CD4-positive, alpha-beta T cell (primary cell): ENCODE measurements at regions of chr17 and their contacts with region 1.

Region 1: GRCh38 chr17:7239091-7240027 is at the start of gene PHF23:
- DNase-seq: peak; percentile 92 to 99 (median 97)
- ATAC-seq: peak; percentile 66
- H3K4me3 ChIP-seq: peak within 1 kb of the TSS; percentile 93
- H3K4me3 Mint-ChIP-seq: peak within 1 kb of the TSS; percentile 94
- H3K27ac ChIP-seq: peak within 1 kb of the TSS; percentile 88
- H3K27ac Mint-ChIP-seq: peak within 1 kb of the TSS; percentile 93
- H3K4me1 ChIP-seq: peaks cover 63% of the 10 kb centered on the region
- H3K4me1 Mint-ChIP-seq: peaks cover 58% of the 10 kb centered on the region
- H3K27me3 ChIP-seq: no peaks in the 10 kb centered on the region
- H3K27me3 Mint-ChIP-seq: peaks cover 4% of the 10 kb centered on the region
- CTCF ChIP-seq: no peak
- total RNA-seq, gene PHF23: 4.5 to 5.1 TPM

Region 2: DNA sequence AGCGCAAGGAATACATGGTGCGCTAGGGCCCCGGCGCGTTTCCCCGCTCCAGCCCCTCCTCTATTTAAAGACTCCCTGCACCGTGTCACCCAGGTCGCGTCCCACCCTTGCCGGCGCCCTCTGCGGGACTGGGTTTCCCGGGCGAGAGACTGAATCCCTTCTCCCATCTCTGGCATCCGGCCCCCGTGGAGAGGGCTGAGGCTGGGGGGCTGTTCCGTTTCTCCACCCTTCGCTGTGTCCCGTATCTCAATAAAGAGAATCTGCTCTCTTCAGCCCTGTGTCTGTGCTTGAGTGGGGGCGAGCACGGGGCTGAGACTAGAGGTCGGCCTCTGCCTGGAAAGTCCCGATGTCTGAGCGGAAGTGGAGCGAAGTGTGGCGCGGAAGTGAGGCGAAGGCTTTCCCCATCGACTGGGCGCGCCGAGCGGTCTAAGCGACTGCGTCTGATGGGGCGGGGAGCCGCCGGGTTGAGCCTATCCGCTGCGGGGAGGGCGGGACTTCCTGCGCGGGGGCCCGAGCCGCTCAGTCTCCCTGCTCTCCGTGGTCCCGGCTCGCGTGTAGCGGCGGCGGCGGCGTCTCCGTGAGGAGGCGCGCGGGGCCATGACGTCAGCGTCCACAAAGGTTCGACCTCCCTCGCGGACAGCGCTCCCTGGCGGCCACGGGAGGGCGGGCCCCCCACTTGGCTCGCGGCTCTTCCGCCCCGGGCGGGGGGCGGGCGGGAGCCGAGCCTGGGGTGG is 224.9 kb before region 1 on chr17:
- CTCF ChIA-PET with region 1: no interaction called
- POLR2A ChIA-PET with region 1: interaction called, 10 read pairs
- intact Hi-C with region 1: no loop called
- DNase-seq: peak; percentile 95 to 100 (median 97)
- ATAC-seq: peak; percentile 76
- H3K4me3 ChIP-seq: peak overlapping the region; percentile 99
- H3K4me3 Mint-ChIP-seq: peak overlapping the region; percentile 99
- H3K27ac ChIP-seq: peak overlapping the region; percentile 98 to 99
- H3K27ac Mint-ChIP-seq: peak overlapping the region; percentile 98
- H3K4me1 ChIP-seq: peaks cover 78% of the 10 kb centered on the region
- H3K4me1 Mint-ChIP-seq: peaks cover 68% of the 10 kb centered on the region
- H3K27me3 ChIP-seq: no peaks in the 10 kb centered on the region
- H3K27me3 Mint-ChIP-seq: no peaks in the 10 kb centered on the region
- CTCF ChIP-seq: peak; percentile 70

Region 3: DNA sequence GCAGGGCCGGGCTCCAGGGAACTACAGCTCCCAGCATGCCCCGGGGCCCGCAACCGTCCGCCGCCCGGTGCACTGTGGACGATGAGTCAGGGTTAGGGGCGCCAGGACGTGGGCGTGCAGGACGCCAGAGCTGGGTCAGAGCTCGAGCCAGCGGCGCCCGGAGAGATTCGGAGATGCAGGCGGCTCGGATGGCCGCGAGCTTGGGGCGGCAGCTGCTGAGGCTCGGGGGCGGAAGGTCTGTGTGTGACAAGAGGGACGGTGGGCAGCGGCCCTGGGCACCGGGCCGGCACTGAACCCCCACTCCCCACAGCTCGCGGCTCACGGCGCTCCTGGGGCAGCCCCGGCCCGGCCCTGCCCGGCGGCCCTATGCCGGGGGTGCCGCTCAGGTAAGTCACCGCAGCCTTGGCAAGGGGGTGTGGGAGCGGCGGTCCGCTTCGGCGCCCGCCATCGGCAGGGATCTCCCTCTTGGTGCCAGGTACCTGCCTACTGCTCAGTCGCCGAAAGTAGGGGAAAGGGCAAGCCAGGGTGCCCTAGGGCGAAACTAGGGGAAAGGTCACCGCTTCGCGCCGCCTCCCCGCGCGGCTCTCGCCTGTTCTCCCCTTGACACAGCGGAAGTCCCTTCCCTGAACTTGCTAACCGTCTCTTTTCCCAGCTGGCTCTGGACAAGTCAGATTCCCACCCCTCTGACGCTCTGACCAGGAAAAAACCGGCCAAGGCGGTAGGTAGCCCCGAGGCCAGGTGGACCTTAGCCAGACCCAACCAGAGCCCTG is 19.4 kb before region 1 on chr17 and contains the starts of genes ACADVL and DLG4:
- CTCF ChIA-PET with region 1: interaction called, 20 read pairs
- POLR2A ChIA-PET with region 1: interaction called, 234 read pairs
- intact Hi-C with region 1: loop called in 1 of 2 experiments (anchors 1 kb)
- DNase-seq: peak; percentile 53 to 86 (median 74)
- ATAC-seq: peak; percentile 50
- H3K4me3 ChIP-seq: peak within 1 kb of the TSS; percentile 70
- H3K4me3 Mint-ChIP-seq: peak within 1 kb of the TSS; percentile 95
- H3K27ac ChIP-seq: peak within 1 kb of the TSS; percentile 75 to 79
- H3K27ac Mint-ChIP-seq: peak within 1 kb of the TSS; percentile 76
- H3K4me1 ChIP-seq: peaks cover 61% of the 10 kb centered on the region
- H3K4me1 Mint-ChIP-seq: peaks cover 54% of the 10 kb centered on the region
- H3K27me3 ChIP-seq: no peaks in the 10 kb centered on the region
- H3K27me3 Mint-ChIP-seq: no peaks in the 10 kb centered on the region
- CTCF ChIP-seq: no peak
- total RNA-seq, gene ACADVL: 237 to 257 TPM
- total RNA-seq, gene DLG4: 10.2 to 11.0 TPM

Region 4: GRCh38 chr17:7314719-7315569 is 75.6 kb after region 1 on chr17 and contains the start of gene GPS2:
- CTCF ChIA-PET with region 1: interaction called, 4 read pairs
- POLR2A ChIA-PET with region 1: interaction called, 10 read pairs
- intact Hi-C with region 1: no loop called
- DNase-seq: peak; percentile 88 to 97 (median 94)
- ATAC-seq: peak; percentile 79
- H3K4me3 ChIP-seq: peak within 1 kb of the TSS; percentile 86
- H3K4me3 Mint-ChIP-seq: peak within 1 kb of the TSS; percentile 97
- H3K27ac ChIP-seq: peak within 1 kb of the TSS; percentile 82 to 92
- H3K27ac Mint-ChIP-seq: peak within 1 kb of the TSS; percentile 95
- H3K4me1 ChIP-seq: peaks cover 58% of the 10 kb centered on the region
- H3K4me1 Mint-ChIP-seq: peaks cover 59% of the 10 kb centered on the region
- H3K27me3 ChIP-seq: no peaks in the 10 kb centered on the region
- H3K27me3 Mint-ChIP-seq: no peaks in the 10 kb centered on the region
- CTCF ChIP-seq: no peak
- total RNA-seq, gene GPS2: 122 to 140 TPM

Region 5: GRCh38 chr17:7583253-7584109 is 344.1 kb after region 1 on chr17 and contains the start of gene MPDU1:
- CTCF ChIA-PET with region 1: no interaction called
- POLR2A ChIA-PET with region 1: interaction called, 12 read pairs
- intact Hi-C with region 1: no loop called
- DNase-seq: peak; percentile 89 to 98 (median 94)
- ATAC-seq: peak; percentile 85
- H3K4me3 ChIP-seq: peak within 1 kb of the TSS; percentile 86
- H3K4me3 Mint-ChIP-seq: peak within 1 kb of the TSS; percentile 98
- H3K27ac ChIP-seq: peak within 1 kb of the TSS; percentile 78 to 98
- H3K27ac Mint-ChIP-seq: peak within 1 kb of the TSS; percentile 98
- H3K4me1 ChIP-seq: peaks cover 56% of the 10 kb centered on the region
- H3K4me1 Mint-ChIP-seq: peaks cover 52% of the 10 kb centered on the region
- H3K27me3 ChIP-seq: no peaks in the 10 kb centered on the region
- H3K27me3 Mint-ChIP-seq: no peaks in the 10 kb centered on the region
- CTCF ChIP-seq: no peak
- total RNA-seq, gene MPDU1: 12.0 to 12.9 TPM